ENCODE measurements at regions of chr22 and their contacts with region 1.

Region 1: GRCh38 chr22:42868751-42869251 is 11.7 kb upstream of the ARFGAP3 start:
- DNase-seq: no peak
- H3K4me3 ChIP-seq: no peak overlapping the region
- H3K27ac ChIP-seq: peak overlapping the region; percentile 57
- H3K4me1 ChIP-seq: peaks cover 23% of the 10 kb centered on the region
- H3K27me3 ChIP-seq: no peaks in the 10 kb centered on the region
- CTCF ChIP-seq: no peak

Region 2: DNA sequence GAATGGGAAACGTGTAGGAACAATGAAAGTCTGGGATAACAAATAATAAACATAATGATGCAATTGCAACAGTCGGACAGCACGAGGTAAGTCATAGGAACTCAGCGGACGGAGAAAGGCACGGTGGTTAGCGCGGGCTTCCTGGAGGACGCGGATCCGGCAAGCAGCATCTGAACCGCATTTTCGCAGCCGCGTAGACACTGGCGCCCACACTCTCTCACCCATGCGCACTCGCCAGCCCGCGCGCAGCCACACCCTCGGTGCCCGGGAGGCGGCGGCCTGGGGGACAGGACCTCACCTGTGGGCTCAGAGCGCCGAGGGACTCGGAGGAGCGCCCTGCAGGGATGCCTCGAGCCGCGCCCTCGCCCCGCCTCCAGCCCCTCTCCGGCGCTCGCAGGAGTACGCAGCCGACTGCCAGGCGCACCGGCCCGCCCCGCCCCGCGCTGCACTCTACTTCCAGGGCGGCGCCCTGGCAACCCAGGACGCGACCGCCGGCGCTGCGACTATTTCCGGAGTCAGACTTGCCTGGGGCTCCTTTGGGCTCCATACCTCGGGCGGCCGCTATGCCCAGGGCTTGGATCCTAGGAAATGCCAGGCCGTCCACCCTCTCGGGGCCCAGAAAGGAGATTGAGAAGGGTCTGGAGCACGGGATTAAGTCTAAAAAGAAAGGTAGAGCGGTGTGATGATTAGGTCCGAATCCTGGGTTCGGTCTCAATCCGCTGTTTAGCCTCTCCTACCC is 220.3 kb after region 1 on chr22 and contains the start of gene TTLL1:
- CTCF ChIA-PET with region 1: interaction called, 7 read pairs
- POLR2A ChIA-PET with region 1: no interaction called
- intact Hi-C with region 1: loop called (anchors 5 kb)
- DNase-seq: peak; percentile 85 to 96
- H3K4me3 ChIP-seq: peak within 1 kb of the TSS; percentile 93
- H3K27ac ChIP-seq: peak within 1 kb of the TSS; percentile 70
- H3K4me1 ChIP-seq: peaks cover 7% of the 10 kb centered on the region
- H3K27me3 ChIP-seq: no peaks in the 10 kb centered on the region
- CTCF ChIP-seq: no peak; the same call in 1 of the 2 replicates
- total RNA-seq, gene TTLL1: 7.8 and 11.2 TPM in 2 replicates

Region 3: GRCh38 chr22:43151251-43152002 is 282.6 kb after region 1 on chr22 and contains the start of gene TSPO:
- CTCF ChIA-PET with region 1: no interaction called
- POLR2A ChIA-PET with region 1: no interaction called
- intact Hi-C with region 1: no loop called
- DNase-seq: peak; percentile 34 to 60
- H3K4me3 ChIP-seq: peak within 1 kb of the TSS; percentile 88
- H3K27ac ChIP-seq: peak within 1 kb of the TSS; percentile 45; the same call in 1 of the 2 replicates
- H3K4me1 ChIP-seq: peaks cover 20% of the 10 kb centered on the region
- H3K27me3 ChIP-seq: no peaks in the 10 kb centered on the region
- CTCF ChIP-seq: no peak
- total RNA-seq, gene TSPO: 243 and 308 TPM in 2 replicates

Region 4: GRCh38 chr22:43164636-43165035 is 295.8 kb after region 1 on chr22:
- CTCF ChIA-PET with region 1: no interaction called
- POLR2A ChIA-PET with region 1: no interaction called
- intact Hi-C with region 1: no loop called
- DNase-seq: peak in 1 of 2 experiments; percentile 24
- H3K4me3 ChIP-seq: no peak overlapping the region
- H3K27ac ChIP-seq: no peak overlapping the region
- H3K4me1 ChIP-seq: no peaks in the 10 kb centered on the region
- H3K27me3 ChIP-seq: no peaks in the 10 kb centered on the region
- CTCF ChIP-seq: no peak

Region 5: GRCh38 chr22:44172370-44173108 is 1303.7 kb after region 1 on chr22:
- CTCF ChIA-PET with region 1: no interaction called
- POLR2A ChIA-PET with region 1: no interaction called
- intact Hi-C with region 1: no loop called
- DNase-seq: no peak
- H3K4me3 ChIP-seq: no peak overlapping the region
- H3K27ac ChIP-seq: no peak overlapping the region
- H3K4me1 ChIP-seq: no peaks in the 10 kb centered on the region
- H3K27me3 ChIP-seq: no peaks in the 10 kb centered on the region
- CTCF ChIP-seq: no peak

Measured in PC-9 (cell line).